Ovary (tissue), 10 donors: ENCODE measurements at regions of chr16 and their contacts with region 1.

Region 1: GRCh38 chr16:73047518-73048291 is at the start of gene ZFHX3:
- DNase-seq: peak; percentile 48 to 72 (median 67)
- H3K4me3 ChIP-seq: peak within 1 kb of the TSS; percentile 85
- H3K27ac ChIP-seq: peak within 1 kb of the TSS; percentile 42 to 64
- H3K4me1 ChIP-seq: peaks cover 7% of the 10 kb centered on the region
- H3K27me3 ChIP-seq: no peaks in the 10 kb centered on the region
- CTCF ChIP-seq: no peak
- EP300 ChIP-seq: no peak
- POLR2A ChIP-seq: no peak
- total RNA-seq, gene ZFHX3: 5.5 to 17.6 (median 12.6) TPM

Region 2: GRCh38 chr16:72856797-72857196 is 190.9 kb before region 1 on chr16:
- intact Hi-C with region 1: loop called in 1 of 4 experiments (anchors 10 kb)
- DNase-seq: no peak
- H3K4me3 ChIP-seq: no peak overlapping the region
- H3K27ac ChIP-seq: no peak overlapping the region
- H3K4me1 ChIP-seq: peaks cover 4% of the 10 kb centered on the region
- H3K27me3 ChIP-seq: no peaks in the 10 kb centered on the region
- CTCF ChIP-seq: no peak
- EP300 ChIP-seq: no peak
- POLR2A ChIP-seq: no peak

Region 3: GRCh38 chr16:72942021-72942420 is 105.7 kb before region 1 on chr16:
- intact Hi-C with region 1: loop called in 1 of 4 experiments (anchors 5 kb)
- DNase-seq: no peak
- H3K4me3 ChIP-seq: no peak overlapping the region
- H3K27ac ChIP-seq: no peak overlapping the region
- H3K4me1 ChIP-seq: peaks cover 3% of the 10 kb centered on the region
- H3K27me3 ChIP-seq: no peaks in the 10 kb centered on the region
- CTCF ChIP-seq: no peak
- EP300 ChIP-seq: no peak
- POLR2A ChIP-seq: no peak